GM10248 (cell line): ENCODE measurements at regions of chr5 and their contacts with region 1.

Region 1: GRCh38 chr5:56402266-56403220 is 169.4 kb upstream of the ANKRD55 start:
- DNase-seq: no peak
- CTCF ChIP-seq: no peak

Region 2: DNA sequence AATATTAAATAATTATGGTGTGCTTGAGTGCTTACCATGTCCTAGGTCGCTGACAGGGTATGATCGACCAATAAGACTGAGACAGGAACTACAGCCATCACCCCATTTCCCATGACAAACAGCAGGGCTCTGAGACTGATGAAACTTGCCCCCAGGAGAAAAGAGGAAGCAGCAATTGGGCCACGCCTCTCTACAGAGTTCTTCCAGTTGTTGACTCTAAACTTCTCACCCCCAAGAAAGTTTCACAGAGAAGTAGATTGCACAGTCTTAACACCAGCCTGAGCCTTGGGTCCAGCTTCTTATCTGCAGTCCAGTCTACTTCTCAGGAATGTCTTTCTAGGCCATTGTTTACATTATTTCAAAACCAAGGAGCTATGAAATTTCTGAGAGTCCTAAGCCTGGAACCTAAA is 12.8 kb after region 1 on chr5:
- CTCF ChIA-PET with region 1: interaction called, 10 read pairs
- POLR2A ChIA-PET with region 1: no interaction called
- DNase-seq: peak; percentile 61
- CTCF ChIP-seq: no peak